Heart right ventricle (tissue), 16 donors: ENCODE measurements at regions of chr5 and their contacts with region 1.

Region 1: DNA sequence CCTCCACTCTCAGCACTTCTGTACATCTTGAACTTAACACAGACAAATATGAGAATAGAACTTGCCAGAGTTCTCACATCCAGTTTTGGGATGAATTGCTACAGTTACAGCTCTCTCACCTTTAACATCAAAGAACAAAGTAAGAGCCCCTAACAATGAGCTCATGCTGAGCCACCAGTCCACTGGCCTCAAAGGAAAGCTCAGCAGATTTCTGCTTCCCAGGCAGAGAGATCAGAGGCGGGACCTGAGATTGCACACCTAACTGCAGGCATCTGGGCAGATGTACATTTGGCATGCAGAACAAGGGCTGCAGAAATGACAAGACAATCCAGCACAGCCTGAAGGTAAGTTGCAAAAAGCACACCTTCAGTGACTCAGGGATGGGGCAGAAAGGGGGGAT is 300.9 kb downstream of the MRPS30 start:
- DNase-seq: no peak
- ATAC-seq: no peak
- H3K4me3 ChIP-seq: no peak overlapping the region
- H3K27ac ChIP-seq: no peak overlapping the region
- H3K4me1 ChIP-seq: no peaks in the 10 kb centered on the region
- H3K27me3 ChIP-seq: no peaks in the 10 kb centered on the region
- CTCF ChIP-seq: no peak

Region 2: DNA sequence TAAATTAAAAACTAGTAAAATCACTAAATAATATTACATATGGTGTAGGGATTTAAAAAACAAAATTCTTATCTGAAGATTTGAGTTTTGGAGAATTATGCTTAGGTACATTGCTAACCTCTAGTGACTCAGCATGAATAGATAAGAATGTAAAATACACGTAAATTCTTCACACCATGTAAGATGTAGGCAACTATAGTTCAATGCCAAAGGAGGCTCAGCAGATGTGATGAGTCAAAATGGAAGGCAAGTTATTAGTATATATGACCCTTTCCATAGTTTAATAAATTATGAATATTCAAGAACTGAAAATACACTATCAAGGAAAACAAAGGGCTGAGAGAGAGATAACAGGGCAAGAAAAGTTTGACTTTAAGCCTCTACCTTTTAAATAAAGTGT is 221.9 kb before region 1 on chr5:
- intact Hi-C with region 1: no loop called
- DNase-seq: no peak
- ATAC-seq: no peak
- H3K4me3 ChIP-seq: no peak overlapping the region
- H3K27ac ChIP-seq: no peak overlapping the region
- H3K4me1 ChIP-seq: no peaks in the 10 kb centered on the region
- H3K27me3 ChIP-seq: no peaks in the 10 kb centered on the region
- CTCF ChIP-seq: no peak

Region 3: GRCh38 chr5:45252991-45253390 is 143.4 kb after region 1 on chr5:
- intact Hi-C with region 1: loop called in 1 of 10 experiments (anchors 10 kb)
- DNase-seq: no peak
- ATAC-seq: peak in 5 of 8 donors; percentile 57 to 85 (median 73)
- H3K4me3 ChIP-seq: no peak overlapping the region
- H3K27ac ChIP-seq: no peak overlapping the region
- H3K4me1 ChIP-seq: peaks cover 0 to 13% (median 0%) of the 10 kb centered on the region in 9 donors
- H3K27me3 ChIP-seq: no peaks in the 10 kb centered on the region
- CTCF ChIP-seq: no peak